ENCODE measurements at regions of chr17 and their contacts with region 1.

Region 1: DNA sequence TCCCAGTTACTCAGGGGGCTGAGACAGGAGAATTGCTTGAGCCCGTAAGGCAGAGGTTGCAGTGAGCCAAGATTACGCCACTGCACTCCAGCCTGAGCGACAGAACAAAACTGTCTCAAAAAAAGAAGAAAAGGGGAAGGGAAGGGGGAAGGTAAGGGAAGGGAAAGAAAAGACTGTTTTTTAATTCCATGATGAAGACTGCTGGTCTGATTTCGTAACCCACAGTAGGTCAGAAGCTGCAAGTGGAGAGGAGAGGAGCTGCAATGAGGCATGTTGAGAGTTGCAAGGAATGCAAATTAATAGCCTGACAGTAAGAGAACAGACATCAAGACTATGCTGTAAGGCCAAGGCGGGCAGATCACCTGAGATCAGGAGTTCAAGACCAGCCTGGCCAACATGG is 33.3 kb downstream of the HELZ start:
- DNase-seq: no peak
- H3K4me3 ChIP-seq: no peak overlapping the region
- H3K27ac ChIP-seq: no peak overlapping the region
- H3K4me1 ChIP-seq: peaks cover 4% of the 10 kb centered on the region
- H3K27me3 ChIP-seq: no peaks in the 10 kb centered on the region
- CTCF ChIP-seq: no peak
- POLR2A ChIP-seq: no peak

Region 2: GRCh38 chr17:67200720-67201301 is 10.9 kb before region 1 on chr17:
- CTCF ChIA-PET with region 1: interaction called, 12 read pairs
- POLR2A ChIA-PET with region 1: no interaction called
- dilution Hi-C with region 1: no loop called
- intact Hi-C with region 1: no loop called
- DNase-seq: no peak
- H3K4me3 ChIP-seq: no peak overlapping the region
- H3K27ac ChIP-seq: no peak overlapping the region
- H3K4me1 ChIP-seq: no peaks in the 10 kb centered on the region
- H3K27me3 ChIP-seq: no peaks in the 10 kb centered on the region
- CTCF ChIP-seq: peak; percentile 30 to 31
- POLR2A ChIP-seq: no peak

Region 3: DNA sequence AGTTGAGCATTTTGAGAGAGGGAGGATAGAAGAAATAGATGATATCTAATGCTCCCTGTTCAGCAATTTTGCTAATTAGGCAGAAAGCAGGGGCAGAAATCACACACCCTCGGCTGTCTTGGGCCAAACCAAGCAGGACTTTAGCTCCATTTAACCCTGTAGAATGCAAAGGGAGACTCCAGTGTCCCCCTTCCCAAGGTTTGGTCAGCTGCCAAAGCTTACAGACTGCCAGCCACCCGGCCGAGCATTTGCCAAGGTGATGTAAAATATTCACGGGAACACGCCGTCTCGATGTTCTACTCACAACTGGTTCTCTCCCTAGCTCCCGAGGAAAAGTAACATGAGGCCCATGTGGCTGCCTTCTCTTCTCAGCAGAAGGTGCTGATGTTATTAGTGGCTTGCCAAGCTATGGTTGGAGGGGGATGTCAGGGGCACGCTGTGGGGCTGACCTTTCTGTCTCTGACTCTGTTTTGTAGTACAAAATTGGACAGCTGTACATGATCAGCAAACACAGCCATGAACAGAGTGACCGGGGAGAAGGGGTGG is 320.7 kb after region 1 on chr17:
- CTCF ChIA-PET with region 1: no interaction called
- POLR2A ChIA-PET with region 1: no interaction called
- dilution Hi-C with region 1: no loop called
- intact Hi-C with region 1: no loop called
- DNase-seq: no peak
- H3K4me3 ChIP-seq: no peak overlapping the region
- H3K27ac ChIP-seq: no peak overlapping the region
- H3K4me1 ChIP-seq: peaks cover 13% of the 10 kb centered on the region
- H3K27me3 ChIP-seq: no peaks in the 10 kb centered on the region
- CTCF ChIP-seq: no peak
- POLR2A ChIP-seq: no peak

Measured in endothelial cell of umbilical vein (primary cell).